B cell (primary cell): ENCODE measurements at regions of chr1 and their contacts with region 1.

Region 1: DNA sequence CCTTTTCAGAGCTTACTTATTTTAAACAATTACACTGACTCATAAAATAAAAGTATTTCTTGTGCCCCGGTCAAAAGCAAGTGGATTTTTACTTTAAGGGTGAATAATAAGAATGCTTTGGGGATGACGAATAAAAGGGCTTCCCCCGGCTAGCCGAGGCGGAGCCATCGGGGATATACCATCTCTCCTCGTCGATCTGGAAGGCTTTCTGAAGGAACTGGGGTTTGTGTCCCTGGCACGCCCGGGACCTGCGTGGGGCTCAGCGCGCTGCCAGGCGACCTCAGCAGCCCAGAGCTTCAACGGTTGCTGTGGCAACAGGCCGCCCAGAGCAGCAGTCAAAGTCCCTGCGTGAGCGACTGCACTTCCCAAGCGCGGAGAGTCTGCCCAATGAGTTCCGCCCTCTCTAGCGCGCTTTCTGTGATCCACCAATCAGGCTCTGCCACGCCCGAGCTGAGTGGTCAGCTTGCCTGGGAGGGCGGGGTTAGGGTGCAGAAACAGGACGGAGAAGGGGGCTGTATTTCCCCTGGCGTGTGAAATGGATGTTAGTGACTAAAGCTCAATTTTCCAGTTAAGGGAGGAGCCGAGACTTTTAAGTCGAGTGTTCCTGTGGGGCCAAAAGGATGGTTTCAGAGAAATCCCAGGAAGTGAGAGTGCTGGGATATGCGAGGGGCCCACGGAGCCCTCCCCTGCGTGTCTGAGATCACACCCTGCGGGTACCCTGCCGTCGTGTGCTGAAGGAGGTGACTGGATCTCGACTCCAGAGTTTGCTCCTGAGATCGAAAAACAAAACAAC is 33.0 kb upstream of the MGST3 start:
- DNase-seq: peak; percentile 91
- ATAC-seq: peak; percentile 98
- H3K4me3 ChIP-seq: peak overlapping the region; percentile 11 to 71 (median 60)
- H3K4me3 Mint-ChIP-seq: peak overlapping the region; percentile 94
- H3K27ac ChIP-seq: peak overlapping the region in 1 of 2 donors; percentile 17
- H3K27ac Mint-ChIP-seq: peak overlapping the region; percentile 80
- H3K4me1 ChIP-seq: peaks cover 19 to 23% of the 10 kb centered on the region in 2 donors
- H3K4me1 Mint-ChIP-seq: peaks cover 21% of the 10 kb centered on the region
- H3K27me3 ChIP-seq: peaks cover 0 to 37% (median 27%) of the 10 kb centered on the region in 4 experiments
- H3K27me3 Mint-ChIP-seq: peaks cover 59% of the 10 kb centered on the region
- CTCF ChIP-seq: no peak

Region 2: GRCh38 chr1:165114022-165114888 is 483.8 kb before region 1 on chr1:
- CTCF ChIA-PET with region 1: interaction called, 5 read pairs
- POLR2A ChIA-PET with region 1: no interaction called
- intact Hi-C with region 1: loop called (anchors 10 kb)
- DNase-seq: peak; percentile 9
- ATAC-seq: no peak
- H3K4me3 ChIP-seq: no peak overlapping the region
- H3K4me3 Mint-ChIP-seq: no peak overlapping the region
- H3K27ac ChIP-seq: no peak overlapping the region
- H3K27ac Mint-ChIP-seq: no peak overlapping the region
- H3K4me1 ChIP-seq: no peaks in the 10 kb centered on the region
- H3K4me1 Mint-ChIP-seq: no peaks in the 10 kb centered on the region
- H3K27me3 ChIP-seq: peaks cover 0 to 12% (median 1%) of the 10 kb centered on the region in 4 experiments
- H3K27me3 Mint-ChIP-seq: peaks cover 33% of the 10 kb centered on the region
- CTCF ChIP-seq: peak; percentile 78

Region 3: DNA sequence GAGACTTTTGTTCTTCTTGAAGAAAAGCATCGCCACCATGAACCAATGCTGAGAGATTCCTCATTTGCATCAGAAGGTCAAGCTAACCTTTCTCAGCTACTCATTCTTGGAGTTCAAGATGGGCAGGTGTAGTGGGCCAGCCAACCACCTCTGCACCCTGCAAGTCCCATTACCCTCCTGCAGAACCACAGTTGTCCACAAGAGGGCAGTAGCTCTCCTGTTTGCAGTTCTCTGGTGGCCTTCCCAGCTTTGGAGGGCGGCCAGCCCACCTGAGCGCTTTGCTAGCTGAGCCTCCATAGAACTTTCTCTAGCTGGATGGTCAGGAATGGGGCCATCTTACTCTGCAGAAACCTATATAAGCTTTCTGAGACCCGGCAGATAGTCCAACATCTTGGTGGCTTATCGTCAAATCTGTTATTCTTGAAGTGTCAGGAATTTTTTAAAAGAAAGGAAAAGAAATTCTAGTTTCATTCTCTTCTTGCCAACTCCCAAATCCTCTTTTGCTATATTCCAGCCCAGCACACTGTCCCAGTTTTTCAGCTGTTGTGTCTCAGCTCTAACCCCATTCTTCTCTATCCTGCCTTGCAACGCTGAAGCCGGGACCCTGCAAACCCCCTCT is 230.6 kb before region 1 on chr1:
- CTCF ChIA-PET with region 1: interaction called, 86 read pairs
- POLR2A ChIA-PET with region 1: no interaction called
- intact Hi-C with region 1: loop called (anchors 1 kb)
- DNase-seq: peak; percentile 78
- ATAC-seq: peak; percentile 64
- H3K4me3 ChIP-seq: no peak overlapping the region
- H3K4me3 Mint-ChIP-seq: no peak overlapping the region
- H3K27ac ChIP-seq: no peak overlapping the region
- H3K27ac Mint-ChIP-seq: no peak overlapping the region
- H3K4me1 ChIP-seq: peaks cover 0 to 7% of the 10 kb centered on the region in 2 donors
- H3K4me1 Mint-ChIP-seq: peaks cover 4% of the 10 kb centered on the region
- H3K27me3 ChIP-seq: peaks cover 0 to 38% (median 5%) of the 10 kb centered on the region in 4 experiments
- H3K27me3 Mint-ChIP-seq: peaks cover 72% of the 10 kb centered on the region
- CTCF ChIP-seq: peak; percentile 94

Region 4: GRCh38 chr1:165580941-165581871 is 16.9 kb before region 1 on chr1:
- CTCF ChIA-PET with region 1: interaction called, 15 read pairs
- POLR2A ChIA-PET with region 1: no interaction called
- intact Hi-C with region 1: no loop called
- DNase-seq: no peak
- ATAC-seq: no peak
- H3K4me3 ChIP-seq: no peak overlapping the region
- H3K4me3 Mint-ChIP-seq: no peak overlapping the region
- H3K27ac ChIP-seq: no peak overlapping the region
- H3K27ac Mint-ChIP-seq: no peak overlapping the region
- H3K4me1 ChIP-seq: no peaks in the 10 kb centered on the region
- H3K4me1 Mint-ChIP-seq: no peaks in the 10 kb centered on the region
- H3K27me3 ChIP-seq: peaks cover 0 to 19% (median 5%) of the 10 kb centered on the region in 4 experiments
- H3K27me3 Mint-ChIP-seq: peaks cover 39% of the 10 kb centered on the region
- CTCF ChIP-seq: no peak

Region 5: DNA sequence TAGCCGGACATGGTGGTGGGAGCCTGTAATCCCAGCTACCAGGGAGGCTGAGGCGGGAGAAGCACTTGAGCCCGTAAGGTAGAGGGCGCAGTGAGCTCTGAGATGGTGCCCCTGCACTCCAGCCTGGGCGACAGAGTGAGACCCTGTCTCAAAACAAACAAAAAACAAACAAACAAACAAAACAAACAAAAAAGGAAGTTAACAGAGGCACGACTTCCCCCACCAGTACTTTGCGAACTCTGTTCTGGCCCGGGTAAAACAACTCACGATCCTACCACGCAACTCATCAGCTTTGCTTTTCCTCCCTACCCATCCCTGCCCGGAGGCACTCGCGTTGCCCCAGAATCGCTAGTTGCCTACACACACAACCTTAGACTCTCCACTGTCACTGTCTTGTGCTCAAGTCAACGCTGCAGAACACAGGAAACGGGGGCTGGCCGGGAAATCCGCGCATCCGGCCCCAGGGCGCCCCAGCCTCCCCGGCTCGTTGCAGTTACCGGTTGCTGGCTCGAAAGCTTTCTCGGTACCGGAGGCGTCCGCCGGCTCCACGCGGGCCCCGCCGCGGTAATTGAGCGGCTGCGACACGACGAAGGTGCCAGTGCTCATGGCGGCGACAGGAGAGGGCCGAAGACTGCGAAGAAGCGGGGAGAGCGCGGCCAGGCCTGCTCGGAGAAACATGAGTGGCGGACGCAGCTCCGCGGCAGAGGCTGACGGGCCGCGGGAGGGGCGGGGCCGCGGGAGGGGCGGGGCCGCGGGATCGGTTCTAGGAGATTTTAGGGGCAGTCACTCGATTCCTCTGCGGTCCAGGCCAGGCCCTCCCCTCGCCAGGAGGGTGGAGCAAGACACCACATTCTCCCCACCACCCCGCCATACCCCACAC is 100.0 kb after region 1 on chr1 and contains the start of gene ALDH9A1:
- CTCF ChIA-PET with region 1: interaction called, 3 read pairs
- POLR2A ChIA-PET with region 1: interaction called, 4 read pairs
- intact Hi-C with region 1: loop called (anchors 1 kb)
- DNase-seq: peak; percentile 89
- ATAC-seq: peak; percentile 89
- H3K4me3 ChIP-seq: peak within 1 kb of the TSS; percentile 73 to 96 (median 95)
- H3K4me3 Mint-ChIP-seq: peak within 1 kb of the TSS; percentile 92
- H3K27ac ChIP-seq: peak within 1 kb of the TSS; percentile 90 to 92
- H3K27ac Mint-ChIP-seq: peak within 1 kb of the TSS; percentile 91
- H3K4me1 ChIP-seq: peaks cover 15 to 18% of the 10 kb centered on the region in 2 donors
- H3K4me1 Mint-ChIP-seq: peaks cover 25% of the 10 kb centered on the region
- H3K27me3 ChIP-seq: peaks cover 0 to 4% (median 0%) of the 10 kb centered on the region in 4 experiments
- H3K27me3 Mint-ChIP-seq: peaks cover 3% of the 10 kb centered on the region
- CTCF ChIP-seq: peak; percentile 24
- total RNA-seq, gene ALDH9A1: 37.5 and 37.9 TPM in 2 replicates

Region 6: DNA sequence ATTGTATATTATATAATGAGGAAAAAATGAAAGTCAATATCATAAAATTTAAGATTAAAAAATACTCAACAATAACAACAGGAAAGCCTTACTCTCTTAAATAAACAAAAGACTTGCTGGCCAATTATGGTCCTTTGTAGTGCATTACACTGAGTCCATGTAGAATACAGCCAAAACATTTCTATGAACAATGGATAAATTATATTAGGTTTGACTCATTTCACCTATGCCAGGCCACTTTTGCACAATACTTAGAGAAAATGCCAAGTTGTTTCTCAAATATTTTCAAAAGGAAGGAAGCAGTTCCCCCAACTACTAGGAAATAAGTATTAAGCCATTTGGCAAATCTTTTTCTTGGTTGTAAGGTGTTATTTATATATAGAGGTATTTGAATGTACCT is 209.5 kb after region 1 on chr1:
- CTCF ChIA-PET with region 1: no interaction called
- POLR2A ChIA-PET with region 1: no interaction called
- intact Hi-C with region 1: no loop called
- DNase-seq: no peak
- ATAC-seq: no peak
- H3K4me3 ChIP-seq: no peak overlapping the region
- H3K4me3 Mint-ChIP-seq: no peak overlapping the region
- H3K27ac ChIP-seq: no peak overlapping the region
- H3K27ac Mint-ChIP-seq: no peak overlapping the region
- H3K4me1 ChIP-seq: no peaks in the 10 kb centered on the region
- H3K4me1 Mint-ChIP-seq: no peaks in the 10 kb centered on the region
- H3K27me3 ChIP-seq: no peaks in the 10 kb centered on the region
- H3K27me3 Mint-ChIP-seq: peaks cover 6% of the 10 kb centered on the region
- CTCF ChIP-seq: no peak

Region 7: DNA sequence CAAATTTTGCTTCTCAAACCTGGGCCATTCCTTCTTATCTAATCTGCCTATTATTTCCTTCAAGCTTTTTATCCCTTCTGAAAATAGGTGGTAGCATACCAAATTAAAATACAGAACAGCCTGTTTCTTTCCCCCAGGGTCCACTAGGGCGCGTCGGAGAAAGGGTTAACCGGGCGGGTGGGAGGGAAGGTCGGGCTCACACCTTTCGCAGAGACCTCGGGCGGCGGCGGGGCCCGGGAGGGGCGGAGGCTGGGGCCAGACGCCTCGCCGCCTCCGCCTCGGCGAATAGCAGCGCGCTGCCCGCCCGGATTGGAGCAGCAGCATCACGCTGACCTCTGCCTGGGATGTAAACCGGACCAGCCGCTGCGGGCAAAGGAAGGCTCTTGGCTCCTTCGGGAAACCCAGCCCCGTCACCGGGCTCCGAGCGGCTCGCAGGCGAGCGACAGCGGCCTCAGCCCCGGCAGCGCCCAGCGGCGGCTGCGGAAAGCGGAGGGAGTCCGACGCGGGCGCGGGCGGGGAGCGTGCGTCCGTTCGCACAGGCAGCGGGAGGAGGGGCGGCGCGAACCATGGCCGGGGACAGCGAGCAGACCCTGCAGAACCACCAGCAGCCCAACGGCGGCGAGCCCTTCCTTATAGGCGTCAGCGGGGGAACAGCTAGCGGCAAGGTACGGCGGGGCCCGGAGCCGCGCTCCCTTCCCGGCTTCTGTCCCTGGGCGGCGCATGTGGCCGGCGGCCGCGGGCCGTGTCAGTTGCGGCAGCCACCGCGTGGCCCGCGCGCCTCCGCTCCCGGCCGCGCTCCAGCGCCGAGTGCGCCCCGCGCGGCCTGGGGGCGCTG is 229.4 kb after region 1 on chr1 and contains the start of gene UCK2:
- CTCF ChIA-PET with region 1: interaction called, 4 read pairs
- POLR2A ChIA-PET with region 1: no interaction called
- intact Hi-C with region 1: loop called (anchors 2 kb)
- DNase-seq: peak; percentile 82
- ATAC-seq: peak; percentile 69
- H3K4me3 ChIP-seq: peak within 1 kb of the TSS; percentile 57 to 88 (median 83)
- H3K4me3 Mint-ChIP-seq: peak within 1 kb of the TSS; percentile 93
- H3K27ac ChIP-seq: peak within 1 kb of the TSS in 1 of 2 donors; percentile 77
- H3K27ac Mint-ChIP-seq: peak within 1 kb of the TSS; percentile 85
- H3K4me1 ChIP-seq: peaks cover 17 to 19% of the 10 kb centered on the region in 2 donors
- H3K4me1 Mint-ChIP-seq: peaks cover 22% of the 10 kb centered on the region
- H3K27me3 ChIP-seq: no peaks in the 10 kb centered on the region
- H3K27me3 Mint-ChIP-seq: no peaks in the 10 kb centered on the region
- CTCF ChIP-seq: no peak
- total RNA-seq, gene UCK2: 11.5 and 12.6 TPM in 2 replicates

Region 8: GRCh38 chr1:165914136-165914798 is 316.2 kb after region 1 on chr1:
- CTCF ChIA-PET with region 1: interaction called, 187 read pairs
- POLR2A ChIA-PET with region 1: no interaction called
- intact Hi-C with region 1: loop called (anchors 1 kb)
- DNase-seq: peak; percentile 81
- ATAC-seq: peak; percentile 84
- H3K4me3 ChIP-seq: no peak overlapping the region
- H3K4me3 Mint-ChIP-seq: no peak overlapping the region
- H3K27ac ChIP-seq: no peak overlapping the region
- H3K27ac Mint-ChIP-seq: no peak overlapping the region
- H3K4me1 ChIP-seq: no peaks in the 10 kb centered on the region
- H3K4me1 Mint-ChIP-seq: peaks cover 2% of the 10 kb centered on the region
- H3K27me3 ChIP-seq: no peaks in the 10 kb centered on the region
- H3K27me3 Mint-ChIP-seq: no peaks in the 10 kb centered on the region
- CTCF ChIP-seq: peak; percentile 90

Region 9: GRCh38 chr1:166119471-166119965 is 521.4 kb after region 1 on chr1:
- CTCF ChIA-PET with region 1: no interaction called
- POLR2A ChIA-PET with region 1: no interaction called
- intact Hi-C with region 1: no loop called
- DNase-seq: no peak
- ATAC-seq: no peak
- H3K4me3 ChIP-seq: no peak overlapping the region
- H3K4me3 Mint-ChIP-seq: no peak overlapping the region
- H3K27ac ChIP-seq: no peak overlapping the region
- H3K27ac Mint-ChIP-seq: no peak overlapping the region
- H3K4me1 ChIP-seq: no peaks in the 10 kb centered on the region
- H3K4me1 Mint-ChIP-seq: no peaks in the 10 kb centered on the region
- H3K27me3 ChIP-seq: no peaks in the 10 kb centered on the region
- H3K27me3 Mint-ChIP-seq: peaks cover 19% of the 10 kb centered on the region
- CTCF ChIP-seq: no peak